ENCODE measurements at regions of chr21 and their contacts with region 1.

Region 1: GRCh38 chr21:39388038-39388810 is 39.3 kb upstream of the HMGN1 start:
- DNase-seq: peak; percentile 94
- ATAC-seq: peak; percentile 86

Region 2: GRCh38 chr21:39183237-39184007 is 204.8 kb before region 1 on chr21 and contains the start of gene PSMG1:
- intact Hi-C with region 1: loop called (anchors 5 kb)
- DNase-seq: peak; percentile 99
- ATAC-seq: peak; percentile 99
- total RNA-seq, gene PSMG1: 18.8 TPM

Region 3: DNA sequence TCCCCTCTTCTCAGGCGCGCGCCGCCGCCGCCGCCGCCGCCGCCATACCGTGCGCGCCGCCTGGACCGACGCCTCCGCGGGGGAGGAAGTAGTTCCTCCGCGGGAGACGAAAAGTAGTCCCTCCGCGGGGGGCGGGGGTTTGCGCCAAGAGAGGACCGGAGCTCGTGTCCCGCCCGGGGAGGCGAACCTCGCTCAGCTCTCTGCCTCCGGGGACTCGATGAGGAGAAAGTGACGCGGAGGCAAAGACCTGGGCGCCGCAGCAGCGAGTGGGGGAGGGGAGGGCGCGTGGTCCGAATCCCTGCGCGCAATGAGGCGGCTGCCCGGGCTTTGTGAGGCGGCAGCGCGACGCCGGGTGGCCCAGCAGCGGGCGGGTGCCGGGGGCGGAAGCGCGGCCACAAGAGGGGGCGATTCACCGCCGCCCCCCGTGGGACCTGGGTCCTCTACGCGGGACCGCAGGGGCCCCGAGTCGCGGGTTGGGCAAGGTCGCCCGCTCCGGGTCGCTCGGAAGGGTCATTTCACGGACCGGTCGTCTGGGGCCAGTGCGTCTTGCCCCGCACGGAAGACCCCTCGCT is 74.6 kb before region 1 on chr21 and contains the start of gene BRWD1:
- intact Hi-C with region 1: loop called (anchors 1 kb)
- DNase-seq: peak; percentile 93
- ATAC-seq: peak; percentile 84
- total RNA-seq, gene BRWD1: 29.1 TPM

Region 4: GRCh38 chr21:39349211-39350093 is 38.8 kb before region 1 on chr21:
- intact Hi-C with region 1: loop called (anchors 2 kb)
- DNase-seq: peak; percentile 98
- ATAC-seq: peak; percentile 96

Region 5: DNA sequence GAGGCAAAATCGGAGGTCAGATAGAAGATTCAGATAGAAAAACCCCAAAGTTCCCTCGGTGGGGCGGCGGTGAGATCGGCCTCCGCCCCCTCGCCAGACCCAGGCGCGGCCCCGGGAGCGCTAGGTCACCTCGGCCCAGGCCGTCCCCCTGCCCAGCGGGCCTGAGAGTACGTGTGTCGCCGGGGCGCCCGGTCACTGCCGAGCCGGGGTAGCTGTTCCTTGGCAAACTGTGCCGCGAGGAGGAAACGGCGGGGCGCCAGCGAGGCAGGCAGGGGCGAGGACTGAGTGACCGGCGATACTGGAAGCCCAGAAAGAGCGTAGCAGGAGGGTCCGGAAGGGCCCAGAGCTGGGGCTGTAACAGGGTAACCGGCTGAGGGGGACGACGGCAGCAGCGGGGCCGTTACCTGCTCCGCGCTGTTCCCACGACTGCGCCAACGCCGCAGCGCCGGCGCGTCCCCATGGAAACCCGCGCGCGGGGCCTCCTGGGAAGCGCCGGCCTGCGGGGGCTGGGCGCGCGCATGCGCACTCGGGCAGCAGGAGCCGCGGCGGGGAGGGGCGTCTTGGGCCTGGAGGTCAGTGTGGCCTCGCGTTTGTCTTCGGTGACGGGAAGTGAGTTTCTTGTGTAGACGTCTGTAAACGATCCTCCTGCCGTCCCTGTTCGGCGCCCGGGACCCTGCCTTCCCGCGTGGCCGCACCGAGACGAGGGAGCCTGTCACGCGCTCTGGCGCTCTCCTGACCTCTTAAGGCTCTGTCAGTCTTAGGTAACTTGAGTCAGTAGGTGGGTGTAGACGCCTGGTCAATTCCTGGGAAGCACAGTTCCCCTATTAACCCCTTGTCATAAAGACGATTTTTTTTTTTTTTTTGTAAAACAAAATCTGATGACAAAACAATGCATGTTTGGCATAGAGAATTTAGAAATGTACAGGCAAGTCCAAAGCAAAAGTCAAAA is 57.4 kb after region 1 on chr21 and contains the start of gene LCA5L:
- intact Hi-C with region 1: loop called (anchors 5 kb)
- DNase-seq: peak; percentile 97
- ATAC-seq: peak; percentile 97
- total RNA-seq, gene LCA5L: 0.46 TPM